CD4-positive, alpha-beta memory T cell (primary cell): ENCODE measurements at regions of chr3 and their contacts with region 1.

Region 1: GRCh38 chr3:32510075-32510724 is 7.5 kb upstream of the CMTM6 start:
- DNase-seq: peak; percentile 56 to 68 (median 59)
- H3K4me3 ChIP-seq: no peak overlapping the region
- H3K4me3 Mint-ChIP-seq: no peak overlapping the region
- H3K27ac ChIP-seq: no peak overlapping the region
- H3K27ac Mint-ChIP-seq: peak overlapping the region in 3 of 7 donors; percentile 1 to 57 (median 37)
- H3K4me1 ChIP-seq: no peaks in the 10 kb centered on the region
- H3K4me1 Mint-ChIP-seq: peaks cover 0 to 4% (median 1%) of the 10 kb centered on the region in 4 donors
- H3K27me3 ChIP-seq: no peaks in the 10 kb centered on the region
- H3K27me3 Mint-ChIP-seq: no peaks in the 10 kb centered on the region

Region 2: DNA sequence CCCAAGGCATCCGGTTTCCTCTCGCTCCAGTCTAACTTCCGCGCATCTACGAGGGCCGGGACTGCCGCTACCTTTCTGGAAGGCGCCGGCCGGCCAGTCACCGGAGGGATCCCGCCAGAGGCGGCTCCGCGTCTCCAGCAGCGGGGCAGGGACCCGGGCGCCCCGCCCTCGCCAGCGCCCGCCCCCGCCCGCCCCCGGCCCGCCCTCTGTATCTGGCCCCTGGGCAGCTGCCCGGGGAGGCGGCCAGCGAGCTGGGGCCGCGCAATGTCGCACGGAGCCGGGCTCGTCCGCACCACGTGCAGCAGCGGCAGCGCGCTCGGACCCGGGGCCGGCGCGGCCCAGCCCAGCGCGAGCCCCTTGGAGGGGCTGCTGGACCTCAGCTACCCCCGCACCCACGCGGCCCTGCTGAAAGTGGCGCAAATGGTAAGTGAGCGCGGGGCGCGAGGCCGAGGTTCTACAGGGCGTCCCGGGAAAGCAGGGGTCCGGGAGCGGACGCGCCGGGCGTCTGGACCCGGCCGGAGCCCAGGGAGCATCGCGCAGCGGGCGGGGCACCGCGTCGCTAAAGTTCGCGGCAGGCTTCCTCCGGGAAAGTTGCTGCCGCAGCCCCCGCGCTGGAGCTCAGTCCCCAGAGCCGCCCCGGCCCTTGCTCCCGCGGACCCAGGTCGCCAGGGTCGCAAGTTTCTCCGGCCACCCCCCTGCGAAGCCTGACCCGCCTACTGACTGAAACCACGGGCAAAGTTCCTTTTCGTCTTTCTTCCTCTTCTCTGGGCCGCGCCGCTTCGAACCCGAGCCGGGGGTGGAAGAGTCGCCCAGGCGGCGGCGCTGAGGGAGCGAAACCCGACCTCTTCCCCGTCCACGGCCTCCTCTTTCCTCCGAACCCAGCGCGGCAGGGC is 118.3 kb before region 1 on chr3 and contains the start of gene CMTM7:
- CTCF ChIA-PET with region 1: no interaction called
- POLR2A ChIA-PET with region 1: no interaction called
- intact Hi-C with region 1: no loop called
- DNase-seq: peak; percentile 57 to 81 (median 67)
- H3K4me3 ChIP-seq: peak within 1 kb of the TSS; percentile 63 to 75
- H3K4me3 Mint-ChIP-seq: peak within 1 kb of the TSS; percentile 95 to 99 (median 97)
- H3K27ac ChIP-seq: peak within 1 kb of the TSS; percentile 76
- H3K27ac Mint-ChIP-seq: peak within 1 kb of the TSS; percentile 95 to 98 (median 97)
- H3K4me1 ChIP-seq: peaks cover 57% of the 10 kb centered on the region
- H3K4me1 Mint-ChIP-seq: peaks cover 36 to 64% (median 46%) of the 10 kb centered on the region in 4 donors
- H3K27me3 ChIP-seq: no peaks in the 10 kb centered on the region
- H3K27me3 Mint-ChIP-seq: no peaks in the 10 kb centered on the region
- total RNA-seq, gene CMTM7: 44.2 to 48.0 TPM

Region 3: GRCh38 chr3:32495609-32496008 is 14.6 kb before region 1 on chr3:
- CTCF ChIA-PET with region 1: interaction called, 16 read pairs
- POLR2A ChIA-PET with region 1: no interaction called
- intact Hi-C with region 1: no loop called
- DNase-seq: no peak
- H3K4me3 ChIP-seq: no peak overlapping the region
- H3K4me3 Mint-ChIP-seq: peak overlapping the region in 3 of 8 donors; percentile 11 to 47 (median 35)
- H3K27ac ChIP-seq: no peak overlapping the region
- H3K27ac Mint-ChIP-seq: peak overlapping the region in 1 of 7 donors; percentile 9
- H3K4me1 ChIP-seq: peaks cover 77% of the 10 kb centered on the region
- H3K4me1 Mint-ChIP-seq: peaks cover 22 to 47% (median 33%) of the 10 kb centered on the region in 4 donors
- H3K27me3 ChIP-seq: no peaks in the 10 kb centered on the region
- H3K27me3 Mint-ChIP-seq: no peaks in the 10 kb centered on the region

Region 4: DNA sequence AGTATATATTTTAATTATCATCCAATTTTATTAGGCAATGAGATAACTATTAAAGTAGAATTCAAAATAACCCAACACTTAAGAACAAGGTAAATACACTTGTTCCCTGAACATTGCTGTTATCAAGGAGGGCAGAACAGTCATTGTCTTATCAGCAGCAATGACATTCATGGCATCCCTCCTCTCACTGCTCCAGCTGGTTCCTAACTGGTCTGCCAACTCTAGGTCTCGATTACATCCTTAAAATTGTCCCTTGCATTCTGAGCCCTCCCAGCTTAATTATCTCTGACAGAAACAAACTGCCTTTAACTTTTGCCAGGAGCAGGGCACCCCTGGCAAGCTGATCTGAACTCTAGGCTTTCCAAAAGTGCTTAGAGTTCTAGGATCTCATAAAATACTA is 74.5 kb after region 1 on chr3:
- CTCF ChIA-PET with region 1: interaction called, 4 read pairs
- POLR2A ChIA-PET with region 1: no interaction called
- intact Hi-C with region 1: loop called (anchors 5 kb)
- DNase-seq: no peak
- H3K4me3 ChIP-seq: no peak overlapping the region
- H3K4me3 Mint-ChIP-seq: no peak overlapping the region
- H3K27ac ChIP-seq: no peak overlapping the region
- H3K27ac Mint-ChIP-seq: no peak overlapping the region
- H3K4me1 ChIP-seq: no peaks in the 10 kb centered on the region
- H3K4me1 Mint-ChIP-seq: no peaks in the 10 kb centered on the region
- H3K27me3 ChIP-seq: no peaks in the 10 kb centered on the region
- H3K27me3 Mint-ChIP-seq: peaks cover 0 to 5% of the 10 kb centered on the region in 2 donors

Region 5: GRCh38 chr3:32667122-32667521 is 156.9 kb after region 1 on chr3:
- CTCF ChIA-PET with region 1: interaction called, 34 read pairs
- POLR2A ChIA-PET with region 1: no interaction called
- intact Hi-C with region 1: no loop called
- DNase-seq: no peak
- H3K4me3 ChIP-seq: no peak overlapping the region
- H3K4me3 Mint-ChIP-seq: no peak overlapping the region
- H3K27ac ChIP-seq: no peak overlapping the region
- H3K27ac Mint-ChIP-seq: no peak overlapping the region
- H3K4me1 ChIP-seq: no peaks in the 10 kb centered on the region
- H3K4me1 Mint-ChIP-seq: no peaks in the 10 kb centered on the region
- H3K27me3 ChIP-seq: no peaks in the 10 kb centered on the region
- H3K27me3 Mint-ChIP-seq: peaks cover 3 to 5% of the 10 kb centered on the region in 2 donors

Region 6: DNA sequence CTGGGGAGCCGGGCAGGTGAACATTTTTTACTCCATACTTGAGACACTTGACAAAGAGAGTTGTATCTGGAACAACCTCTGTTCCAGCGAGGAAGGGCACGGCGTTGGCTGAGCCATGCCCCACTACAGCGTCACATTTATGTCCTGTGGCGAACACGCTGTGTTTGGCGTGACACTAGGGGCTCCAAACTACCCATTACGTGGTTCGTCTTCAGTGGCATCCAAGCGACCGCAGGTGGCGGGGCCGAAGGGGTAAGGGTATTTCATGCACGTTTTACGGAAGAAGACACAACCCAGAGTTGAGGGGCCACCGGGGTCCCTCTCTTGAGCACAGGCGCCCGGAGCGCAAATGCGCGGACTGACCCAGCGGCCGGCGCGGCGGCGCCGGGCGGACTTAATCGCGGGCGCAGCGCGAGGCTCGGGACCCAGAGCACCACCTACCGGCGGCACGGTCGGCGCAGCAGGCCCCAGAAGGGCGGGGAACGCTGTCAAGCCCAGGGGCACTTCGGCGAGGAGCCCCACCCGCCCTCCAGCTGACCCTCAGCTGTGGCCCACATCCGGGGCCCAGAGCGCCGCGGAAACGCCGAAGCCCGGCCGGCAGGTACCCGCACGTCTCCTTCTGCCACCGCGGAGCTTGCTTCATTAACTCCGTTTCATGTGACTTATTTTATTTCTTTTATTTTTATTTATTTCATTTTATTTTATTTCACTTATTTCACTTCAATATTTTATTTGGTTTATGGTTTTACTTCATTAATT is 271.2 kb after region 1 on chr3:
- CTCF ChIA-PET with region 1: interaction called, 4 read pairs
- POLR2A ChIA-PET with region 1: no interaction called
- intact Hi-C with region 1: loop called (anchors 1 kb)
- DNase-seq: peak; percentile 35 to 52 (median 42)
- H3K4me3 ChIP-seq: peak overlapping the region; percentile 60 to 84
- H3K4me3 Mint-ChIP-seq: peak overlapping the region; percentile 87 to 95 (median 90)
- H3K27ac ChIP-seq: no peak overlapping the region
- H3K27ac Mint-ChIP-seq: peak overlapping the region in 3 of 7 donors; percentile 42 to 63 (median 59)
- H3K4me1 ChIP-seq: peaks cover 6% of the 10 kb centered on the region
- H3K4me1 Mint-ChIP-seq: peaks cover 2 to 13% (median 4%) of the 10 kb centered on the region in 4 donors
- H3K27me3 ChIP-seq: peaks cover 3% of the 10 kb centered on the region
- H3K27me3 Mint-ChIP-seq: peaks cover 3 to 4% of the 10 kb centered on the region in 2 donors